Ascending aorta (tissue), 2 donors: ENCODE measurements at regions of chr11 and their contacts with region 1.

Region 1: DNA sequence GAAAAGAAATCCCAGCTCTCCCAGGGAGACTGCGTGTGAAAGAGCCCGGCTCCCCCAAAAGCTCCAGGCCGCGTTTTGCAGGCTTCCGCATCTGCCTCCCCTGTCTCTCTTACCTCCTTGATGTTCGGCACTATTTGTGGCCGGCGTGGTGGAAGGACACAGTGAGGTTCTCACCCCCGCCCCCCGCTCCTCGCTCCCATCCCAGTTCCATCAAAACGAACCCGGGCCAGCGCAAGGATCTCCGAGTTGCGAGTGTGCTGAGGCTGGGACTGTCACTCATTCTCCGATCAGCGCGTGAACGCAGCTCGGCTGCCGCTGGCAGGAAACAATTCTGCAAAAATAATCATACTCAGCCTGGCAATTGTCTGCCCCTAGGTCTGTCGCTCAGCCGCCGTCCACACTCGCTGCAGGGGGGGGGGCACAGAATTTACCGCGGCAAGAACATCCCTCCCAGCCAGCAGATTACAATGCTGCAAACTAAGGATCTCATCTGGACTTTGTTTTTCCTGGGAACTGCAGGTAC is at the start of gene NCAM1:
- DNase-seq: peak in 1 of 2 donors; percentile 68
- H3K4me3 ChIP-seq: peak within 1 kb of the TSS; percentile 69 to 79
- H3K27ac ChIP-seq: peak within 1 kb of the TSS in 1 of 2 donors; percentile 1
- H3K4me1 ChIP-seq: peaks cover 0 to 7% of the 10 kb centered on the region in 2 donors
- H3K27me3 ChIP-seq: no peaks in the 10 kb centered on the region
- CTCF ChIP-seq: no peak
- total RNA-seq, gene NCAM1: 3.3 TPM

Region 2: GRCh38 chr11:112226062-112226830 is 735.0 kb before region 1 on chr11 and contains the start of gene PTS:
- intact Hi-C with region 1: loop called (anchors 5 kb)
- DNase-seq: peak; percentile 19 to 92
- H3K4me3 ChIP-seq: peak within 1 kb of the TSS; percentile 79 to 85
- H3K27ac ChIP-seq: peak within 1 kb of the TSS; percentile 93 to 97
- H3K4me1 ChIP-seq: peaks cover 0 to 10% of the 10 kb centered on the region in 2 donors
- H3K27me3 ChIP-seq: no peaks in the 10 kb centered on the region
- CTCF ChIP-seq: no peak
- total RNA-seq, gene PTS: 13.5 TPM

Region 3: GRCh38 chr11:112884012-112884767 is 77.0 kb before region 1 on chr11:
- intact Hi-C with region 1: loop called (anchors 2 kb)
- DNase-seq: no peak
- H3K4me3 ChIP-seq: peak overlapping the region; percentile 17 to 23
- H3K27ac ChIP-seq: no peak overlapping the region
- H3K4me1 ChIP-seq: peaks cover 0 to 21% of the 10 kb centered on the region in 2 donors
- H3K27me3 ChIP-seq: no peaks in the 10 kb centered on the region
- CTCF ChIP-seq: no peak

Region 4: GRCh38 chr11:112983887-112984286 is 22.7 kb after region 1 on chr11:
- intact Hi-C with region 1: no loop called
- DNase-seq: no peak
- H3K4me3 ChIP-seq: no peak overlapping the region
- H3K27ac ChIP-seq: no peak overlapping the region
- H3K4me1 ChIP-seq: no peaks in the 10 kb centered on the region
- H3K27me3 ChIP-seq: no peaks in the 10 kb centered on the region
- CTCF ChIP-seq: no peak

Region 5: DNA sequence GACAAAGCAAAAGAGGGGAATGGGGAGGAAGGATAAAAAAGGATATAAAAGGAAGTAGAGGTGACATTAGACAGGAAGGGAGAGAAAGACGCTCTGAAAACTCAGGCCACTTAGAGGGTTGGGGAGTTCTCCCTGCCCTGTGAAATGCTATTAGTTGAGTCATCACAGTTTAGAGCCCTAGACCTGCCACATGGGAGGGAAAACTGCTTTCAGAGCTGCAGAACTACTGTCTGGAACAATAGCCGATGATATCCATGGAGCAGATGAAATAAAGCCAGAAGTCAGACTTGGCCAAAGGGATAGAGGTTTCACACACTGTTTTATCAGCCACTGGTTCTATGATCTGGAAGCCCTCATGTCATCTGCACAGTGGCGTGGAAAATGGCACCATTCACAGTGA is 157.9 kb after region 1 on chr11:
- intact Hi-C with region 1: loop called (anchors 5 kb)
- DNase-seq: no peak
- H3K4me3 ChIP-seq: no peak overlapping the region
- H3K27ac ChIP-seq: peak overlapping the region; percentile 64 to 70
- H3K4me1 ChIP-seq: peaks cover 0 to 17% of the 10 kb centered on the region in 2 donors
- H3K27me3 ChIP-seq: no peaks in the 10 kb centered on the region
- CTCF ChIP-seq: no peak